Posterior vena cava (tissue), 2 donors: ENCODE measurements at regions of chr9 and their contacts with region 1.

Region 1: DNA sequence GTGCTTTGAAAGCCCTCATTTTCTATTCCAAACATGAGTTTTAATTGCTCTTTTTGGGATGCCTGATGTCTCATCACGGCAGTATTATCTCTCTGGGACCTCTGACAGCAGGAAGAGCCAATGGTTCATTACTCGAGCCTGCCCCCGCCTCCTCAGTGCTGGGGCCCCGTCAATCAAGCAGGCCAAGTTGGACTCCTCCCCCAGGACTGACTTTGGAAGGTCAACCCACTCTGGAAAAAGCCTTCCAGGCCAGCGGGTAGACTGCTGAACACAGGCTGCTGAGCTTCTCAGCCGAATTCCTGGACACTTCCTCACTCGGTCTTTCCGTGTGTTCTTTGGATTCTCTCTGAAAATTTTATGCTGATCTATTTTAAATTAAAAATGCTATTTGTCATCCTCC is 9.5 kb upstream of the BARHL1 start:
- DNase-seq: no peak

Region 2: DNA sequence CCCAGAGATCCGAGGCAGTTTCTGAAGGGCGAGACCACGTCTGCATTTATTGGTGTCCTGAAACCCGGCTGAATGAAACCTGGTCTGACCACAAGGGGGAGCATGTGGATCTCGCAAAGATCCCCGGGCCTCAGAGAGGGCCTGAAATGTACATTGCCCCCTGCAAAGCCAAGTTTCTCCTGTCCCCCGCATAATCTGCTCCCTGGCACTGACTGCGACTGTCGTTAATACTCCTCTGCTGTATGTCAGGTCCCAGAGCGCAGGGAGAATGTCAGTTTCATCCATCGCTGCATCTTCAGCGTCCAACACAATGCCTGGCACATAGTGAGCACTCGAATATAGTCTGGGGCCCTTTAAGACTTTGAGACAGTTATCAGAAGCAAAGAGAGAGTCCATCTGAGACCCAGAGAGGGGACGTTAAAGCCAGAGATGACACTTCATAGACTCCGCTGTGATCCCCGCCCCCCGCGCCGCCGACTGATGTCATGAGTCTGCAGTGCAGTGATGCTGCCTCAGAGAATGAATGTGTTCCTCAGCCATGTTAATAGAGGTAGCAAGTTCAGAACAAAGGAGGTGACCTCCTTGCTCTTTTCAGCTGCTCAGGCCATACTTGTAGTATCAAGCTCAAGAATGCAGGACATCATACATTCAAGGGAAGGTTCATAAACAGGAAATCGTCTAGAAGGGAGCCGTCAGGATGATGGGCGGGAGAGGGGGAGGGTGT is 65.0 kb before region 1 on chr9:
- intact Hi-C with region 1: loop called in 1 of 2 experiments (anchors 5 kb)
- DNase-seq: peak; percentile 88

Region 3: GRCh38 chr9:132516911-132517310 is 56.0 kb before region 1 on chr9:
- intact Hi-C with region 1: loop called in 1 of 2 experiments (anchors 5 kb)
- DNase-seq: peak; percentile 41

Region 4: DNA sequence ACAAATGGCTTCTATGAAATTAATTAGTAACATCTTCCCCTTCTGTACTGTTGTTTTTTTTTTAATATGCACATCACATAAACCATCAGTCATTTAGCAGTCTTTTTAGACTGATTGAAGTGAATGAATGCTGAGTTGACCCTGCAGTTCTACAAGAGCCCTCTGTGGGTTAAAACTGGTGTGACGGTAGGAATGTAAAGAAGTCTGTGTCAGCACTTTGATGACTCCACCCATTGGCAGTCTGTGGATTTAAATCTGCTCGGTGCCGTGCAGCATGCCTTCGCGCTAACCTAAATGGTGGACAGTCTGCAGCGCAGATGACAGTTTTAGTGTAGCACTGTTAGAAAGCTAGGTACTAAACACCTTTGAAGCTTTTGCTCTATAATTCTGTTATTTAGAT is 100.4 kb after region 1 on chr9:
- intact Hi-C with region 1: no loop called
- DNase-seq: no peak